Heart right ventricle (tissue), 16 donors: ENCODE measurements at regions of chr19 and their contacts with region 1.

Region 1: GRCh38 chr19:2962045-2962561 is 15.3 kb upstream of the TLE6 start:
- DNase-seq: peak in 1 of 2 donors; percentile 65
- ATAC-seq: peak; percentile 65 to 93 (median 81)
- H3K4me3 ChIP-seq: peak overlapping the region in 2 of 10 donors; percentile 27 to 34
- H3K27ac ChIP-seq: no peak overlapping the region
- H3K4me1 ChIP-seq: peaks cover 0 to 8% (median 3%) of the 10 kb centered on the region in 9 donors
- H3K27me3 ChIP-seq: no peaks in the 10 kb centered on the region
- CTCF ChIP-seq: peak; percentile 60 to 87 (median 79)

Region 2: DNA sequence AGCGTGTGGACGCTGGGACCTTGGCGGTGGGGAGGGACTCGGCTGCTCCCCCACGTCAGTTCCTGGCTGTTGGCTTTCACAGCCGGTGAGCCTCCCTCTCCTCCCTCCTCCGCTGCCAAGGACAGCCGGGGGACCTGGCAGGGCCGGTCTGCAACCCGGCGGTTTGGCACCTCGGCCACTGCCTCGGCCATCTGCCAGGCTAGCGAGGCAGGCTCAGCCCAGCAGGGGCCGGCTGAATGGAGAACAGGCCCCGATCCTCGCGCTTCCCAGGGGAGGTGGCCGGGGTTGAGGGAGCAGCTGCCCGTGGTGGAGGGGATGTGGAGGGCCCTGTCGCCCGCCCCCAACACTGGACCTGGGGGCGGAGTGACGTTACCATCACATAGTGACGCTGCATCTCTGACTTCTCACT is 95.2 kb after region 1 on chr19:
- intact Hi-C with region 1: no loop called
- DNase-seq: peak; percentile 86 to 91
- ATAC-seq: peak; percentile 62 to 86 (median 76)
- H3K4me3 ChIP-seq: peak overlapping the region in 5 of 10 donors; percentile 5 to 22 (median 18)
- H3K27ac ChIP-seq: peak overlapping the region; percentile 38 to 100 (median 82)
- H3K4me1 ChIP-seq: peaks cover 12 to 64% (median 49%) of the 10 kb centered on the region in 9 donors
- H3K27me3 ChIP-seq: no peaks in the 10 kb centered on the region
- CTCF ChIP-seq: peak in 1 of 9 donors; percentile 18

Region 3: GRCh38 chr19:3108775-3109174 is 146.7 kb after region 1 on chr19:
- intact Hi-C with region 1: loop called in 7 of 10 experiments (anchors 5 to 10 kb)
- DNase-seq: peak; percentile 53 to 55
- ATAC-seq: peak in 6 of 8 donors; percentile 26 to 41 (median 36)
- H3K4me3 ChIP-seq: no peak overlapping the region
- H3K27ac ChIP-seq: peak overlapping the region in 1 of 10 donors; percentile 31
- H3K4me1 ChIP-seq: peaks cover 7 to 59% (median 22%) of the 10 kb centered on the region in 9 donors
- H3K27me3 ChIP-seq: no peaks in the 10 kb centered on the region
- CTCF ChIP-seq: peak; percentile 61 to 92 (median 79)